ENCODE measurements at regions of chr12 and their contacts with region 1.

Region 1: DNA sequence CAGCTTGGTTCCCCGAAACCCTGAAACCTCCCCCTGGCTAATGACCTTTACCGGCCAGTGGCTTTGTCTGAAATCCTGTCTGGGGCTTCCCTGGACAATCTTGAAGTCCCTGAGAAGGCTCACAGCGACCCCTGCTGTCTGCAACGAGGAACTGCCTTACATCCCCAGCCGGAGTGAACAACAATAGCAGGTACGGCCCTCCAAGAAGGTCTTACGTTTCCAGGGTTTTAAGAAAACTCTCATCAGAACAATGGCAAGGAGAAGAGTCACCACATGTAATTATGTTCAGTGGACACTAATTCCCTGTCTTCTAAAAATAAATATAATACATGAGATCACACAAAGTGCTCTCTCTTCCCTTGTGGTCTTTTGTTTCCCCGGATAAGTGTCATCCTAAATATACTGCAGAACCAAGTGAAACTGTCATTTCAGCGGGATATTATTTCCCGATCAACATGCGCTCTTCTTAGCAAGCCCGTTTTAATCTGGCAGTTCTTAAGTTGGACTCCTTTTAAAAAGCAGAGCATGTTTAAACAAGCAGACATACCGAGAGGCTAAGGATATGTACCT is 53.3 kb downstream of the RBM19 start:
- DNase-seq: peak; percentile 43 to 96 (median 82)

Region 2: DNA sequence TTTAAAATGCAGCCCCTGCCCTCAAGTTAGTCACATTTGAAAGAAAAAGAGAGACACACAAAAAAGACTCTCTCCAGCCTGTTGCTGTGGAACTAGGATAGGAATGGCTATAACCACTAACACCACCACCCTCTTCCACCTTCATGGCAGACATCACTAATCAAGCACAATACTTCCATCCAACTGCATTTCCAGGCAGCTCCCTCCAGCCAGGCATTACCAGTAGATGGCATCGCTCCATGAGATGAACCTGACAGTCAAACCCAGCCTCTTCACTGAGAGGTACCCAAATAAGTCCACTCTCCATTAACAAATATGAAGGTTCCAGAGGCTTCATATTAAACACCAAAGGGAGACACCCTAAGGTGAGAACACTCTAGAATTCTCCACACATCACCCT is 602.4 kb before region 1 on chr12:
- intact Hi-C with region 1: loop called (anchors 5 kb)
- DNase-seq: no peak

Region 3: DNA sequence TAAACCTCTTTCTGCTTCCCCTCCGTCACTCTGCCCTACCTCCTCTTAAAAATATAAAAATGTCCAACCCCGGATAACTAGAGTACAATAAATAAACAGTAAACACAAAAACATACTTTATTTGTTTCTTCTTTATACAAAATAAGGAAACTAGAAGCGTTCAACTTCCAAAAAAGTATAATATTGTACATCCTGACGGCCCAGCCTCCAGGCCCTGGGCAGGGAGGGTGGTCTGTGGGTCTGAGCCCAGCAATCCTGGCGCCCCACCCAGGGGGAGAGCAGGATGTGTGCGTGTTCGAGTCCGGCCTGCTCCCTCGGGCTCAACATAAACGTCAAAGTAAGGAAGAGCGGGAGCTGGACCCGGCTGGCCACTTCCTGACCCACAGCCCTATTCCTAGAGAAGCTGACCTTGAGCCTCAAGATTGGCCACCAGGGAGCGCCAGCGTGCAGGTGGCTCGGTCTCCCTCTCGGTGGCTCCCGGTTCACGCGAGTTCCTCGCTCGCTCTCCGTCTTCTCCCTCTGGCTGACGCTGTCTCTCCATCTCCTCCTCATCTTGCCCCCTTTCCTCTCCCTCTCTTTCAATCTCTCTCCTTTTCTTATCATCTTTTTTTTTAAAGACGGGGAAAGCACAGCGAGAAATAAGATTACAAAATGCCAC is 450.6 kb before region 1 on chr12:
- intact Hi-C with region 1: loop called (anchors 1 kb)
- DNase-seq: peak; percentile 35 to 94 (median 75)

Region 4: GRCh38 chr12:113647048-113647447 is 265.8 kb before region 1 on chr12:
- intact Hi-C with region 1: loop called (anchors 5 kb)
- DNase-seq: peak in 5 of 10 donors; percentile 15 to 45 (median 40)

Region 5: GRCh38 chr12:113874999-113875561 is 37.8 kb before region 1 on chr12:
- intact Hi-C with region 1: no loop called
- DNase-seq: peak in 2 of 10 donors; percentile 66 to 75

Region 6: DNA sequence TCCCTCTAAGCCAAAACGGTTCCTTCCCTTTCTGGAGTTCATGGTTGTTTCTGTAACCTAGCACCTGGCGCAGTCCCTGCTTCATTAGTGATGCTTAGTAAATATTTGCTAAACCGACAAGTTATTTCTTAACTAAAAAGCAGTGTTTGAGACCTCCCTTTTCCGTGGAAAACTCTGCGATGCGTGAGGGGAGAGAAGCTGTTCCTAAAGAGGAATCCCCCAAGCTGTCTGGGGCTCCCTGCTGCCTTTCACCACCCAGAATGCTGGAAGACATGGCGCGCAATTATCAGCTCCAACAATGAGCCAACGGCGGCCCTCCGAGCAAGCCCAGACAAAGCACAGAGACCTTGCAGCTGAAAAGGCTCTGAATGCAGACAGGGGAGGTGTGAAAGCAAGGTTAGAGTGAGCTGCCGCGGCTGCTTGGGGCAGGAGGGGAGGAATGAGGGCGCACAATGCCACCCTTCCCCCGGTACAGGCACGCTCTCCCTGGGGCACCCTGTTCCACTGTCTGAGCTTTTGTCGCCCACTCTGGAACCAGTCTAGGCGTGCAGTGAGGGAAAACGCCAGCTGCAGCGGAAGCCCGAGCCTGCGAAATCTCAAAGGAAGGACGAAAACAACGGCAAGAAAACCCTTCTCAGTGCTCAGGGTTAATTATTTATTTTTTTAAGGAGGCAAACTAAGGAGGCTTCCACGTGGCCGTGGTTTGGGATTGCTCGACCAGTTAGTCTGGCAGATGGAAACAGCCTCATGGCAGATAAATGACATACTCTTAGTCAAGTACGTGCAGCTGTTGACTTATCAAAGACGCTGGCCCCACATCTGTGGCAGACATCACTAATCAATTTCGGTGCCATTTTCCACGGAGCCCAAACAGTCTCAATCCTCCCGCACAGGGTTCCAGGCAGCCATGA is 13.0 kb before region 1 on chr12:
- intact Hi-C with region 1: no loop called
- DNase-seq: peak in 5 of 10 donors; percentile 27 to 88 (median 34)